Posterior cingulate gyrus (tissue), 11 donors: ENCODE measurements at regions of chr5 and their contacts with region 1.

Region 1: GRCh38 chr5:9670371-9670770 is 40.2 kb upstream of the TAS2R1 start:
- DNase-seq: peak in 2 of 10 donors; percentile 18 to 59

Region 2: DNA sequence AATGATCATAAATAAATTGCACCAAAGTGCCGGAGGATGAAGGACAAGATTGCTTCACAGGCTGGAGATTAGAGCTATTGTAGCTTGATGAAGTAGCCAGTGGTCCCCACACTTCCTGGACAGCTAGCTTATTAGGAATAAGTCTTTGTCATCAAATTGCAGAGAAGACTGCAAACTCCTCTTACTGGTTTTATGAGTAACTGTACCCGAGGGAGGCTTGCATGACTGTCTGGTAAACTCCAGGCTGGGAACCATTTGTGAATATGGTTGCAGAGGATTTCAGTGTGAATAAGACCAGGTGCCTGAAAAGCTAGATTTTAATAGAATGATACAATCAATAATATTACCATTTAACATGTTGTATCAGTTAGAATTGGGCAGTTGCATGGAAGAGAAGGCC is 88.0 kb before region 1 on chr5:
- intact Hi-C with region 1: no loop called
- DNase-seq: no peak

Region 3: DNA sequence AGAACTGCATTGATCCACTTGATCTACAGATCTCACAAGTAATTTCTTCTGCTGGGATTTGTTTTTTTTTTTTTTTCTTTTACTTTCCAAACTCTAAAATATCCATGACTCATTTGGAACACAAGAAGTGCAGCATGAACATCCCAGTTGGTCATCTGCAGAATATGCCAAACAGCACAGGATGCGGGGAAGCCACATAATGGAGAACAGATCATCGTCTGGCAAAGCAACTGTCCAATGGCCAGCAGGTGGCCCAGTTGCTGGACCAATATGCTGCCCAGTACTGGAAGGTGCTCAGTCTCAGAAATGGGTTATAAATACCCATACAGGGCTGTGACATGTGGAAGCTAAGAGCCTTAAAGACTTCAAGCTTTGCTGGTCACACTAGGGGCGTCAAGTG is 181.1 kb after region 1 on chr5:
- intact Hi-C with region 1: loop called (anchors 5 kb)
- DNase-seq: peak in 8 of 10 donors; percentile 19 to 88 (median 42)

Region 4: DNA sequence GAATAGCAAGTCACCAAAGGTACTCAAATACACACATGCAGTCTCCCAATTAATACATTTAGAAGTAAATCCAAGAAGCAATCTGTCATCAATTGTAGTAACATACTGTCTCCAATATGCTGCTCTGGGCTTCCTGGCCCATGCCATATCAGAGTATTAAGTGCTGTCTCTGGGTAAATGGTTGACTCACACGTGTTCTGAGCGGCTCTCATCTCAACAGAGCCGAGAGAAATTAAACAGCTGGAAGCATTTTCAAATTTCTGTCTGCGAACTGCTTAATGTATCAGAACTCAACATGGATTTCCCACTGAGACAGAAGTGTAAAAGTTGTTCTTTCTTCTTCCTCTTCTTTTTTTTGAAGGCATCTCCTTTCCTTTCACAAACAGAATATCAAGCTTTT is 207.1 kb after region 1 on chr5:
- intact Hi-C with region 1: no loop called
- DNase-seq: no peak